A673 (cell line): ENCODE measurements at regions of chr5 and their contacts with region 1.

Region 1: GRCh38 chr5:112146323-112147226 is 272.5 kb downstream of the EPB41L4A start:
- DNase-seq: peak; percentile 80
- H3K4me3 ChIP-seq: no peak overlapping the region
- H3K27ac ChIP-seq: no peak overlapping the region
- H3K4me1 ChIP-seq: no peaks in the 10 kb centered on the region
- H3K27me3 ChIP-seq: no peaks in the 10 kb centered on the region
- CTCF ChIP-seq: peak; percentile 77

Region 2: DNA sequence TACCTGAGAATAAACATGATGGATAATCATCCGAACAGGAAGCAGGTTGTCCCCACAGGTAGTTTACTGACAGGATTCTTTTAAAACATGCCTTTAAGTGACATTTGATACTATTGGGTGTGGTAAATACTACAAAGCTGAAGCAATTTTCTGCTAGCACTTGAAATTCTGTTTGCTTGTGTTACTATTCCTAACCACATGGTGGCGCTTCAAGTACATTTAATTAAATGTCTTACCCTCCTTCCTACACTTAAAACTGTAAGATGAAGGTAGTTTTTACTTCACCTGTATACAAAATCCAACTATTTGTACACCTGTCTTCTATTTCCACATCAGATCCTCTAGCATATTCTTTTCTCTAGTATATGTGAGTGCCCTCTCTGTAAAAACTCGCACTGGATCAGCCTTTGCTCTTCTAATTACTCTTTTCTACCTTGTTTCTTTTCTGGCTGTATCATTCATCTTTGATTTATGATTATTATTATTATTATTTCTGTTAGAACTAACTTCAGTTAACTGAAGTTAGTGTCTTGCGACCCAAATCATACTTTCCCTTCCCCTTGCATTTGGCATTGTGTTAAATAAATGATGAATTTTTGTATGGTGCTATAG is 1389.4 kb before region 1 on chr5:
- CTCF ChIA-PET with region 1: no interaction called
- POLR2A ChIA-PET with region 1: no interaction called
- intact Hi-C with region 1: loop called (anchors 5 kb)
- DNase-seq: peak; percentile 59
- H3K4me3 ChIP-seq: no peak overlapping the region
- H3K27ac ChIP-seq: no peak overlapping the region
- H3K4me1 ChIP-seq: no peaks in the 10 kb centered on the region
- H3K27me3 ChIP-seq: no peaks in the 10 kb centered on the region
- CTCF ChIP-seq: peak; percentile 72

Region 3: GRCh38 chr5:111158105-111158744 is 988.4 kb before region 1 on chr5:
- CTCF ChIA-PET with region 1: no interaction called
- POLR2A ChIA-PET with region 1: no interaction called
- intact Hi-C with region 1: loop called (anchors 5 kb)
- DNase-seq: peak; percentile 81
- H3K4me3 ChIP-seq: no peak overlapping the region
- H3K27ac ChIP-seq: no peak overlapping the region
- H3K4me1 ChIP-seq: no peaks in the 10 kb centered on the region
- H3K27me3 ChIP-seq: no peaks in the 10 kb centered on the region
- CTCF ChIP-seq: peak; percentile 96

Region 4: DNA sequence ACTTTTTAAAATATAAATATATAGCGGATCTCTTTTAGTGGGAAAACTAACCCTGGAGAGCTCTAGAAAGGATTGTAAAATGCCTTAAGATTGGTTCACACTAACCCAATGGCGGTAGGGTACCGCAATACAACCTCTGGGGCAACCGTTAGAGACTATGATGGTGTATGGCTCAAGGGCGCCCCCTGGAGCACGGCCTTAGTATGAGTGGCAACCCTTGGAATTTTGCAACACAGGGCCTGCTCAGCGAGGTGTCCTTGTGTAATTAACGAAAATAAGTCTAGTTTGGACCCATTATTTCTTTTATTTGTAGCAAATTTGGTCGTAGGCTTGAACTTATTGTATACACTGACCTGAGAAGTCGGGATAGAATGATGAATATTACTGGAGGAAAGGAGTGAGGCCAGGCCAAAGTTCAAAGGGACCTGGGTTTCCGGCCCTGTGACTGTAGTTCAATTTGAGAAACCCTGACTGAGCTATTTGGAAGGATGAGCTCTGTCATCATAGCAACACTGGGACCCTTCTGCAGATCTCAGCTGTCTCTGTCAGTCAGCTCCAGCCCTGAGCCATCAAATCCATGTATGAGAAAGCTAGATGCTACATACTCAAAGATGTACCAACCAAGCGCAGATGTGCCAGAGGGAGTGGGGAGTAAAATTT is 867.6 kb before region 1 on chr5:
- CTCF ChIA-PET with region 1: no interaction called
- POLR2A ChIA-PET with region 1: no interaction called
- intact Hi-C with region 1: loop called (anchors 10 kb)
- DNase-seq: peak; percentile 72
- H3K4me3 ChIP-seq: no peak overlapping the region
- H3K27ac ChIP-seq: no peak overlapping the region
- H3K4me1 ChIP-seq: no peaks in the 10 kb centered on the region
- H3K27me3 ChIP-seq: peaks cover 18% of the 10 kb centered on the region
- CTCF ChIP-seq: peak; percentile 89

Region 5: DNA sequence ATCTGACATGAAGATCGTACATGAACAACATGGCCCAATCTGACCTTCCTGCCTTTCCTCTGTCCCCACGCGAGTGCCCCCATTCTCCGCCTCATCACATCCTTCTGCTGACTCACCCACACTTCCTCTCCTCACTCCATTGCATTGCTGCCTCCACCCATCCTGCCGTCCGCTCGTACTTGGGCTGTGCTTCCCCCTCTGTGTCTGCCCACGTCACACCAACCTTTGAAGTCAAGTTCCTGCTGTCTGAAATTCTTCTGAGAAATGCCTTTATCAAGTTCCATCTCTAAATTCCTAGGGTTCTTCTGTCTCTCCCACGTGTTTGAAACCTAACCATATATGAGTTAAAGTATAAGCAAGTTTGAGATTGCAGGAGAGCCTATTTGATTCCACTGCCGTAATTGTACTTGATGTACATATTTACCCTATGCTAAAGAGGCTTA is 616.3 kb before region 1 on chr5:
- CTCF ChIA-PET with region 1: no interaction called
- POLR2A ChIA-PET with region 1: no interaction called
- intact Hi-C with region 1: loop called (anchors 5 kb)
- DNase-seq: peak; percentile 54
- H3K4me3 ChIP-seq: no peak overlapping the region
- H3K27ac ChIP-seq: no peak overlapping the region
- H3K4me1 ChIP-seq: no peaks in the 10 kb centered on the region
- H3K27me3 ChIP-seq: no peaks in the 10 kb centered on the region
- CTCF ChIP-seq: no peak

Region 6: GRCh38 chr5:111550279-111551020 is 596.1 kb before region 1 on chr5:
- CTCF ChIA-PET with region 1: interaction called, 6 read pairs
- POLR2A ChIA-PET with region 1: no interaction called
- intact Hi-C with region 1: loop called (anchors 1 kb)
- DNase-seq: peak; percentile 89
- H3K4me3 ChIP-seq: no peak overlapping the region
- H3K27ac ChIP-seq: no peak overlapping the region
- H3K4me1 ChIP-seq: peaks cover 5% of the 10 kb centered on the region
- H3K27me3 ChIP-seq: no peaks in the 10 kb centered on the region
- CTCF ChIP-seq: peak; percentile 73

Region 7: GRCh38 chr5:111680737-111681413 is 465.7 kb before region 1 on chr5:
- CTCF ChIA-PET with region 1: no interaction called
- POLR2A ChIA-PET with region 1: no interaction called
- intact Hi-C with region 1: loop called (anchors 10 kb)
- DNase-seq: peak; percentile 14
- H3K4me3 ChIP-seq: no peak overlapping the region
- H3K27ac ChIP-seq: no peak overlapping the region
- H3K4me1 ChIP-seq: no peaks in the 10 kb centered on the region
- H3K27me3 ChIP-seq: no peaks in the 10 kb centered on the region
- CTCF ChIP-seq: no peak

Region 8: DNA sequence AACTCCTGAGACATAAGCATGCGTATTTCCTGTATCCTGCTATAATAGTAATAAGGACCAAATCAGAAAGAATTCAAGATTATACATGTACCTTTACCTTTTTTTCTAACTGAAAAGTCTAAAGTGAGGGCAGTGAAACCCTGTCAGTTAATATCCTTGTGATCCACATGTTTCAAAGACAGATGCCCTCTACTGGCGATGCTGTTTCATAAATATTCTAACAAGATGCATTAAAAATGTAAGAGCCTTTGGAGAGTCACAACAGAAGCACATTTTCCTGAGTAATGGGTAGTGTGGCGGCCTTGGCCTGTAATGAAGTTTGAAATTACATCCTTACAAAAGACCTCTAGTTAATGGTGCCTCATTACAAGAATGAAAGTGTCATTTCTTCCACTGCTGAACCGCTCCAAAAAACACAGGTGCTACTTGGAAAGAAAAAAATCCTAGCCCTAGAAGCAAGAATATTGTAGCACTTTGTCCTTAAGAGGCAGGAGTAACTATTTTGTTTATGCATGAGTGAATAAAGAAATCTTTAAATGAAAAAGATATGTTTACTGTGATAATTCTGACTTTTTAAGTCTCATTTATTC is 39.9 kb after region 1 on chr5:
- CTCF ChIA-PET with region 1: no interaction called
- POLR2A ChIA-PET with region 1: no interaction called
- intact Hi-C with region 1: no loop called
- DNase-seq: peak; percentile 62
- H3K4me3 ChIP-seq: no peak overlapping the region
- H3K27ac ChIP-seq: no peak overlapping the region
- H3K4me1 ChIP-seq: no peaks in the 10 kb centered on the region
- H3K27me3 ChIP-seq: peaks cover 61% of the 10 kb centered on the region
- CTCF ChIP-seq: peak; percentile 73